MCF 10A (cell line): ENCODE measurements at regions of chr4 and their contacts with region 1.

Region 1: DNA sequence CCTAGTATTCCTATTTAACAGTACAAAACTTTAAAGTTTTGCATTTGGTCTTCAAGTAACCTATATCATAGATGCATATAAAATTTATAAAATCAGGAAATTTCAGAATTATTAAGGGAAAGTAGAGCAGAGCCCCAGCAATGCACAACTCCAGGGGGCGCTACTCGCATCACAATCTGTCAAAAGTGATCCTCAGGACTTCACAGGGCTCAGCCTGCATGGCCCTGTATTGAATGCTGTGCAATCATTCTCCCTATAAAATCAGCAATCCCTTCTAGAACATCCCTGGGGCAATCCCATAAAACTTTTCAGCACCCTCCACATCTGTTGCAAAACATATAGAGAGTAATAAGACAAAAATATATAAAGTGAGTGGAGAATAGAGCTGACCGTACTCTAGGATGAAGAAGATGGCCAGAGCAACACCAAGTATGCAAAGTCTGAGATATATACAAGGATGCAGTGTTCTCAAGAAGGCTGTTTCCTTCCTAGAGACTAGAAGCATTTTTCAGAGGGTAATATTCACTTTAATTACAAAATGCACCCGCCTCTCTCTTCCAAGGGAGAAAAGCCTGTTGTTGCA is 12.5 kb upstream of the PPARGC1A start:
- DNase-seq: no peak
- H3K4me3 Mint-ChIP-seq: no peak overlapping the region
- H3K27ac Mint-ChIP-seq: no peak overlapping the region
- H3K4me1 Mint-ChIP-seq: no peaks in the 10 kb centered on the region
- H3K27me3 Mint-ChIP-seq: no peaks in the 10 kb centered on the region
- CTCF ChIP-seq: peak; percentile 16

Region 2: DNA sequence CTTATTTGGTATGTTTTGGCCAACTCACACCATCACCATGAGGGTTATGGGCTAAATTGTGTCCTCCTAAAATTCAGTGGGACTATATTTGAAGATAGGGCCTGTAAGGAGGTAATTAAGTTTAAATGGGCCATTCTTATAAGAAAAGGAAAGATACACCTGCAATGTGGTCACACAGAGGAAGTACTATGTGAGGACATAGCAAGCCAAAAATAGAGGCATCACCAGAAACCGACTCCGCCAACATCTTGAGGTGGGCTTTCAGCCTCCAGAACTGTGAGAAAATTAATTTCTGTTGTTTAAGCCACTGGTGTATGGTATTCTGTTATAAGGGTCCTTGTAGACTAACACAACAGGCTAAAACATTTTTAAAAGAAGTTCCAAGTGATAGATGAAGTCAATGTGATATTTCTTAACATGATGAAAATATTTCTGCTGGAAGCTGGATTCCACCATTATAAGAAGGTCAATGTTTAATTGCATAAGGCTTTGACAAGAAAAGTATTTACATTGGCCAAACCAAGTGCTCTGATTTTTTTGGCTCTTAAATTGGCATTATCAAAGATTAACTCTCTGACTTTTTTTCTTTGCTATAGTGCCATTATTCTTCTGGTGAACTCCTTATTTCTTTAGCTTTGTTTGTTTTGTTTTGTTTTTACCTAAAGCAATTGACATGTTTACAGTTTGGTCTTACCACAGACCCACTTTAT is 553.4 kb before region 1 on chr4:
- CTCF ChIA-PET with region 1: no interaction called
- POLR2A ChIA-PET with region 1: no interaction called
- intact Hi-C with region 1: no loop called
- DNase-seq: no peak
- H3K4me3 Mint-ChIP-seq: no peak overlapping the region
- H3K27ac Mint-ChIP-seq: no peak overlapping the region
- H3K4me1 Mint-ChIP-seq: no peaks in the 10 kb centered on the region
- H3K27me3 Mint-ChIP-seq: no peaks in the 10 kb centered on the region
- CTCF ChIP-seq: no peak

Region 3: DNA sequence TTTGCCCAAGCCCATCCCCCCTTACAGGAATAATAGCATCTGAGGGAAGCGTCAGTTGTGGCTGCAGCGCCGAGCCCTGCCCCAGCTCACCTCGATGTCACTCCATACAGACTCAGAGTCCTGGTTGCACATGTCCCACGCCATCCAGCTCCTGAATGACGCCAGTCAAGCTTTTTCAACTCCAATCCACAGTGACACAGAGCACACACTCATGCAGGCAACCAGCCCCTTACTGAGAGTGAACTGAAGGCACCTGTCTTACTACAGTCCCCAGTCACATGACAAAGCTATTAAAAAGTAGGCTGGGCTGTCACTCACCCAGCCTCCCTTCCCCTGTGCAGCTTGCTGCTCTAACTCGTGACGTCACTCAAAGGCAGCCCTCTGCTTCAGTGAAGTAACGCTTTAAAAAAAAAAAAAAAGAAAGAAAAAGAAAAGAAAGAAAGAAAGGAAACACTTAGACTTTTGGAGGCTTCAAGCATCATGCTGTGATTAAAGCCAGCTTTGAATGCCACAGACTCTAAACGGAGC is 12.4 kb before region 1 on chr4 and contains the start of gene PPARGC1A:
- CTCF ChIA-PET with region 1: interaction called, 11 read pairs
- POLR2A ChIA-PET with region 1: interaction called, 8 read pairs
- intact Hi-C with region 1: no loop called
- DNase-seq: peak; percentile 16
- H3K4me3 Mint-ChIP-seq: peak within 1 kb of the TSS; percentile 71
- H3K27ac Mint-ChIP-seq: no peak within 1 kb of the TSS
- H3K4me1 Mint-ChIP-seq: peaks cover 32% of the 10 kb centered on the region
- H3K27me3 Mint-ChIP-seq: no peaks in the 10 kb centered on the region
- CTCF ChIP-seq: no peak
- total RNA-seq, gene PPARGC1A: 0.12 and 0.49 TPM in 2 replicates